Calu3 (cell line): ENCODE measurements at regions of chr9 and their contacts with region 1.

Region 1: GRCh38 chr9:6667633-6668280 is 22.2 kb upstream of the GLDC start:
- DNase-seq: no peak
- H3K4me3 Mint-ChIP-seq: no peak overlapping the region
- H3K27ac Mint-ChIP-seq: no peak overlapping the region
- H3K4me1 Mint-ChIP-seq: peaks cover 21% of the 10 kb centered on the region
- H3K27me3 Mint-ChIP-seq: no peaks in the 10 kb centered on the region
- CTCF ChIP-seq: peak; percentile 68

Region 2: DNA sequence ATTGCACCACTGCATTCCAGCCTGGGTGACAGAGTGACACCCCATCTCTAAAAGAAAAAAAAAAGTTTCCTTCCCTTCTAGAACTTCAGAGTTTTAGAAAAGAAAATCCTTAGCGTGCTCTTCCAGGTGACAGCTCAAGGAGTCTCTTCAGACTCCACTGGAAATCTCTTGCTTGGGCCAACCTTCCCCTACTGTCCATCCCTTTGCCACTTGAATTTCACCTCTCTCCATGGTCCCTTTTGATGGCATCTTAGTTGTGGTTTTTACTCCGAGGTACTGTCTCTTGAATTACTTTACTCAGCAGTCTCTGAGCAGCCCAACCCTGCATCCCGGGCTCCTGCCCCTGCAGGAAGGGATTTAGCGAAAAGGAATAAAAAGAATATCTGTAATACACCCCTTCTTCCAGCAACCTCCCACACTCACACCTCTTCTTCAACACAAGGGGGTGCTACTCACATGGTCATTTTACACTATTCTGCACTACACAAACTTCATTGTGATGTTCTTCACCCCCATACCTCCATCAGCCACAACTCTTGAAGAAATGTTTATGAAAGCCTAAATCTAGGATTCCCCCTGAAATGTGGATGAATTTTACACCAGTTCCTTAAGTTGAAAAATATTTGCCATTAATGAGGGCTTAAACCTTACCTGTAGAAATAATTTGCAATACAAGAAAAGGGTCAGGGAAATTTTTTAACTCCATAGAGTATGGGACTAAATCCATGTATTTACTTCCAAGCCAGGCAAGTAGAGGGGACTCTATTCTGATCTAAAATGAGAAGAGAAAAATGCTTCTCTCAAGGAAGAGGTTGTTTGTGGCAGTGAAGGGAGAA is 313.7 kb before region 1 on chr9:
- CTCF ChIA-PET with region 1: no interaction called
- intact Hi-C with region 1: loop called (anchors 10 kb)
- DNase-seq: peak; percentile 21
- H3K4me3 Mint-ChIP-seq: no peak overlapping the region
- H3K27ac Mint-ChIP-seq: no peak overlapping the region
- H3K4me1 Mint-ChIP-seq: no peaks in the 10 kb centered on the region
- H3K27me3 Mint-ChIP-seq: no peaks in the 10 kb centered on the region
- CTCF ChIP-seq: peak; percentile 52

Region 3: GRCh38 chr9:6412487-6413364 is 255.0 kb before region 1 on chr9 and contains the start of gene UHRF2:
- CTCF ChIA-PET with region 1: no interaction called
- intact Hi-C with region 1: no loop called
- DNase-seq: peak; percentile 91
- H3K4me3 Mint-ChIP-seq: peak within 1 kb of the TSS; percentile 69
- H3K27ac Mint-ChIP-seq: peak within 1 kb of the TSS; percentile 30
- H3K4me1 Mint-ChIP-seq: peaks cover 9% of the 10 kb centered on the region
- H3K27me3 Mint-ChIP-seq: peaks cover 8% of the 10 kb centered on the region
- CTCF ChIP-seq: no peak
- total RNA-seq, gene UHRF2: 38.4 and 38.8 TPM in 2 replicates

Region 4: DNA sequence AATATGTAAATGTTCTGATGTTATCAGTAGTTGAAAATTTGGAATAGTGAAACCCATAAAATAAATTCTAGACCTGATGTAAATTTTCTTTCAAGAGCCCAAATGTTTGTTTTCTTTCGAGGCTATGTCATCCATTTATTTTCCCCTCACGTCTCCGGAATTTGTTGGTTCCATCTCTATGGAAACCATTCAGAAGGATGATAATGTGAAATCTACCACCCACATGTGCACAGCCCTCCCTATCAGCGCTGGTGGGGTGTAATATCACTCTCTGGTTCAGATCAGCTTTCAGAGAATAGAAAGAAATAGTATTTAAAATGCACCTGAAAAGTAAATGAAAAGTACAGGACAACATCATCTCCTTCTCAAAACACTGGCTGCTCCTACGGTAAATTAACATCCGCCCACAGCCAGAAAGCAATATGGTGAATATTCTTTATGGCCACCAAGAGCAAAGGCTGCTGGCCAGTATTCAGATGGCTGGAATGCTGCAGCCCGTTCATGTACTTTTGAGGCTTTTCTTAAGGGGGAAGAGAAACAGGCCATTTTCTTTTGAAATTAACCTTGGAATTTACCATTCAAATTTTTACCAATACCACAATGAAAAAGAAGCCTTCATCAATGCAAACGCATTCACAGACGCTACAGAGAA is 50.7 kb before region 1 on chr9:
- CTCF ChIA-PET with region 1: no interaction called
- intact Hi-C with region 1: no loop called
- DNase-seq: no peak
- H3K4me3 Mint-ChIP-seq: no peak overlapping the region
- H3K27ac Mint-ChIP-seq: no peak overlapping the region
- H3K4me1 Mint-ChIP-seq: no peaks in the 10 kb centered on the region
- H3K27me3 Mint-ChIP-seq: no peaks in the 10 kb centered on the region
- CTCF ChIP-seq: no peak